ENCODE measurements at regions of chr1 and their contacts with region 1.

Region 1: DNA sequence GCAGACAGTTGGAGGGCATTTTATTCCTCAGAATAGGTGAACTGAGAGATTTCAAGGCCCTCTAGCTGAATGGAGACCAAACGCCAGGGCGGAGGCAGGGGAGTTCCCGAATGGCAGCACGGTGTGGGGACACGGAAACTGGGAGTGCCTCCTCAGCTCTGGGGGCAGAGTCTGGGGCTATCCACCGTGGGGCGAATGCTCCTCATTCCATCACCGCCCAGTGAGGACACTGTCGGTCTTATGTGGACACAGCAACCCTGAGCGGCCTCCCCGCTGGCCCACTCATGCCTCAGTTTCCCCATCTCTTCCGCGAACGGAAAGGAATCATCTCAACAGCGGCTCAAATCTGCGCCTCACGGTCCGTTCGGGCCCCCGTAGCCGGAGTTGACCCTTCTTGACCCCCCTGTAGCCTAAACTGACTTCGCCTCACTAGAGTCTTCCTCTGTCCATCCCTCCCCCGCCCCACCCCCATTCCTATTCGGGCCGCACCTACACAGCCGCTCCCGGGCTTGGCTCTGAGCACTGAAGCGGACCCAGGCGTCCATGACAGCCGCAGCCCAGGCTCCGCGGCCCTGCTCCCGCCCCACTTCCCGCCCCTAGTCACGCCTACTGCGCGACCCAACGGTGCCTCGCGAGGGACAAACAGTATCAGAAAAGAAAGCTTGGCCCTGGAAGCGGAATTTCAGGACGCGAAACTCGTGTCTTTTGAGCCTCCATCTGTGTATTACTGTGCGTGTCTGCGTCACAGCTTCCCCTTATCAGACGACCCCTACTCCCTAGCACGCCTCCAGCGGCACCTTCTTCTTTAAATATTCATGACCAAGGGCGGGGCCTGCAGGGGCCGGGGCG is at the start of gene PEX11B:
- DNase-seq: peak; percentile 75
- ATAC-seq: peak; percentile 84
- H3K4me3 ChIP-seq: peak within 1 kb of the TSS; percentile 74 to 95
- H3K27ac ChIP-seq: peak within 1 kb of the TSS; percentile 62
- H3K4me1 ChIP-seq: peaks cover 9 to 25% of the 10 kb centered on the region in 2 experiments; a peak in 3 of 4 replicates
- H3K27me3 ChIP-seq: no peaks in the 10 kb centered on the region
- CTCF ChIP-seq: no peak
- POLR2A ChIP-seq: no peak
- RAD21 ChIP-seq: no peak
- total RNA-seq, gene PEX11B: 20.9 TPM

Region 2: DNA sequence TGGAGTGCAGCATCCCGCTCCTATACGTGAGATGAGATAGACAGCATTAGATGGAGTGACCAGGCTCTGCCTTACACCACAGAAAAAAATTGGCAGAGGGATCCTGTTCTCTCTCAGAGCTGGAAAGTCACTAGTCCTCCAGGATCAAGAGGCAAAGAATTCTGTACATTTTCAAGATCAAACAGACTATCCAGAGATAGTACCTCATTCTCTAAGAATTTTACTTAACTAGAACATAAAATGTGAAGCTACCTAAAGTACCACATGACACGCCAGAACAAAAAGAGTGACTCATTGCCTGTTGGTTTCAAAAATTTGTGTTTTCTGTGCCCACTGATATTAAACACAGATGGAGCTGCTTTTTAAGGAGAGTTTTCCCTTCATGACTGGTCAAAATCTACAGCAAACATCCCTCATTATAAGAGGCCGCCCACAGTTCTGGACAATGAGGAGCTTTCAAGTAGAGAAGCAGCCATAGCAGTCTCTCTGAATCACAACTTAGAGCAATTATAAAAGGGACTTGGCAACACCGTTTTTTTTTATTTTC is 166.8 kb before region 1 on chr1:
- CTCF ChIA-PET with region 1: no interaction called
- POLR2A ChIA-PET with region 1: no interaction called
- RAD21 ChIA-PET with region 1: no interaction called
- intact Hi-C with region 1: no loop called
- DNase-seq: no peak
- ATAC-seq: no peak
- H3K4me3 ChIP-seq: no peak overlapping the region
- H3K27ac ChIP-seq: peak overlapping the region; percentile 25; the same call in 1 of the 2 replicates
- H3K4me1 ChIP-seq: peaks cover 0 to 5% of the 10 kb centered on the region in 2 experiments; a peak in 2 of 4 replicates
- H3K27me3 ChIP-seq: no peaks in the 10 kb centered on the region
- CTCF ChIP-seq: no peak
- POLR2A ChIP-seq: no peak
- RAD21 ChIP-seq: no peak

Region 3: GRCh38 chr1:145901318-145902021 is 16.9 kb before region 1 on chr1:
- CTCF ChIA-PET with region 1: no interaction called
- POLR2A ChIA-PET with region 1: no interaction called
- RAD21 ChIA-PET with region 1: no interaction called
- intact Hi-C with region 1: no loop called
- DNase-seq: no peak
- ATAC-seq: peak; percentile 78
- H3K4me3 ChIP-seq: no peak overlapping the region
- H3K27ac ChIP-seq: no peak overlapping the region
- H3K4me1 ChIP-seq: no peaks in the 10 kb centered on the region
- H3K27me3 ChIP-seq: no peaks in the 10 kb centered on the region
- CTCF ChIP-seq: peak; percentile 23 to 32 (median 26); a peak in 4 of 6 replicates
- POLR2A ChIP-seq: no peak
- RAD21 ChIP-seq: peak; percentile 19; the same call in 1 of the 2 replicates

Region 4: GRCh38 chr1:145963995-145964901 is 45.9 kb after region 1 on chr1 and contains the starts of genes ANKRD34A and POLR3GL:
- CTCF ChIA-PET with region 1: no interaction called
- POLR2A ChIA-PET with region 1: no interaction called
- RAD21 ChIA-PET with region 1: no interaction called
- intact Hi-C with region 1: loop called (anchors 5 kb)
- DNase-seq: peak; percentile 92
- ATAC-seq: peak; percentile 97
- H3K4me3 ChIP-seq: peak within 1 kb of the TSS; percentile 70 to 73
- H3K27ac ChIP-seq: peak within 1 kb of the TSS; percentile 64
- H3K4me1 ChIP-seq: peaks cover 19 to 27% of the 10 kb centered on the region in 2 experiments
- H3K27me3 ChIP-seq: no peaks in the 10 kb centered on the region
- CTCF ChIP-seq: no peak
- POLR2A ChIP-seq: peak; percentile 85
- RAD21 ChIP-seq: no peak
- total RNA-seq, gene ANKRD34A: 1.1 TPM
- total RNA-seq, gene POLR3GL: 17.9 TPM

Measured in HCT116 (cell line).